CD8-positive, alpha-beta memory T cell (primary cell): ENCODE measurements at regions of chr15 and their contacts with region 1.

Region 1: DNA sequence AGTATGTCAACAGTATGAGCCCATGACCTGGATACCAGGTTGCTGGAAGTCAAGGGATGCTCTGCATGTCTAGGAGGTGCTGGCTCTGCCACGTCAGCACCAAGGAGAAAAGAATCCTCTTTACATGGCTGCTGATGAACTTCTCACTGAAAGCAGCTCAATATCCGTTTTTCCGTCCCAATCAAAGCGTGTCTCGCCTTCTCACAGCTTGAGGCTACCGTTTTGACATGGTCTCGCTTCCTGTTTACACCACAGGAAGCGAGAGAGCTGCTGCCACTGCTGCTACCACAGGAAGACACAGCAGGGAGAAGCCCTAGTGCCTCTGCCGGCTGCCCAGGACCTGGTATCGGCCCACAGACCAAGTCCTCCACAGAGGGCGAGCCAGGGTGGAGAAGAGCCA is 27.3 kb downstream of the STARD5 start:
- DNase-seq: peak; percentile 53 to 85 (median 83)
- H3K4me3 ChIP-seq: peak overlapping the region; percentile 89
- H3K4me3 Mint-ChIP-seq: peak overlapping the region; percentile 96 to 100 (median 99)
- H3K27ac ChIP-seq: peak overlapping the region; percentile 61
- H3K27ac Mint-ChIP-seq: peak overlapping the region; percentile 91 to 100 (median 98)
- H3K4me1 ChIP-seq: peaks cover 59% of the 10 kb centered on the region
- H3K4me1 Mint-ChIP-seq: peaks cover 65 to 66% (median 65%) of the 10 kb centered on the region in 3 donors
- H3K27me3 ChIP-seq: no peaks in the 10 kb centered on the region
- H3K27me3 Mint-ChIP-seq: peaks cover 0 to 2% of the 10 kb centered on the region in 2 donors

Region 2: DNA sequence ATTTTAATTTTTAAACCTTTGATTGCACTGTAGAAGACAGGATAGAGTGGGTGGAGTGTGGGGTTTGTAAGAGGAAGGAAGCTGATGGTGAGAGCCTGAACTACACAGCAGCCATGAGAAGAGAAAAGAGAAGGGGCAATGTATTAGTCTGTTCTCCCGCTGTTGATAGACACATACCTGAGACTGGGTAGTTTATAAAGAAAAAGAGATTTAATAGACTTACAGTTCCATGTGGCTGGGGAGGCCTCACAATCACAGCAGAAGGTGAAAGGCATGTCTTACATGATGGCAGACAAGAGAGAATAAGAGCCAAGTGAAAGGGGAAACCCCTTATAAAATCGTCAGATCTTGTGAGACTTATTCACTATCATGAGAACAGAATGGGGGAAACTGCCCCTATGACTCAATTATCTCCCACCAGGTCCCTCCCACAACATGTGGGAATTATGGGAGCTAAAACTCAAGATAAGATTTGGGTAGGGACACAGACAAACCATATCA is 10.0 kb before region 1 on chr15:
- CTCF ChIA-PET with region 1: interaction called, 19 read pairs
- POLR2A ChIA-PET with region 1: interaction called, 5 read pairs
- DNase-seq: peak in 2 of 5 donors; percentile 48 to 74
- H3K4me3 ChIP-seq: peak overlapping the region; percentile 21
- H3K4me3 Mint-ChIP-seq: peak overlapping the region; percentile 4 to 78 (median 73)
- H3K27ac ChIP-seq: no peak overlapping the region
- H3K27ac Mint-ChIP-seq: peak overlapping the region; percentile 89 to 98 (median 96)
- H3K4me1 ChIP-seq: peaks cover 75% of the 10 kb centered on the region
- H3K4me1 Mint-ChIP-seq: peaks cover 67 to 78% (median 75%) of the 10 kb centered on the region in 3 donors
- H3K27me3 ChIP-seq: no peaks in the 10 kb centered on the region
- H3K27me3 Mint-ChIP-seq: no peaks in the 10 kb centered on the region

Region 3: GRCh38 chr15:81308260-81308659 is 11.6 kb after region 1 on chr15:
- CTCF ChIA-PET with region 1: interaction called, 11 read pairs
- POLR2A ChIA-PET with region 1: interaction called, 17 read pairs
- DNase-seq: no peak
- H3K4me3 ChIP-seq: no peak overlapping the region
- H3K4me3 Mint-ChIP-seq: no peak overlapping the region
- H3K27ac ChIP-seq: no peak overlapping the region
- H3K27ac Mint-ChIP-seq: peak overlapping the region in 7 of 8 donors; percentile 26 to 100 (median 74)
- H3K4me1 ChIP-seq: peaks cover 64% of the 10 kb centered on the region
- H3K4me1 Mint-ChIP-seq: peaks cover 75 to 99% (median 91%) of the 10 kb centered on the region in 3 donors
- H3K27me3 ChIP-seq: no peaks in the 10 kb centered on the region
- H3K27me3 Mint-ChIP-seq: no peaks in the 10 kb centered on the region

Region 4: GRCh38 chr15:81336568-81336967 is 39.9 kb after region 1 on chr15:
- CTCF ChIA-PET with region 1: interaction called, 20 read pairs
- POLR2A ChIA-PET with region 1: no interaction called
- DNase-seq: peak; percentile 13 to 59 (median 31)
- H3K4me3 ChIP-seq: no peak overlapping the region
- H3K4me3 Mint-ChIP-seq: no peak overlapping the region
- H3K27ac ChIP-seq: no peak overlapping the region
- H3K27ac Mint-ChIP-seq: peak overlapping the region in 3 of 8 donors; percentile 13 to 66 (median 60)
- H3K4me1 ChIP-seq: peaks cover 2% of the 10 kb centered on the region
- H3K4me1 Mint-ChIP-seq: peaks cover 0 to 5% (median 5%) of the 10 kb centered on the region in 3 donors
- H3K27me3 ChIP-seq: no peaks in the 10 kb centered on the region
- H3K27me3 Mint-ChIP-seq: no peaks in the 10 kb centered on the region

Region 5: GRCh38 chr15:81780966-81781365 is 484.3 kb after region 1 on chr15:
- CTCF ChIA-PET with region 1: no interaction called
- POLR2A ChIA-PET with region 1: no interaction called
- DNase-seq: no peak
- H3K4me3 ChIP-seq: no peak overlapping the region
- H3K4me3 Mint-ChIP-seq: no peak overlapping the region
- H3K27ac ChIP-seq: no peak overlapping the region
- H3K27ac Mint-ChIP-seq: no peak overlapping the region
- H3K4me1 ChIP-seq: no peaks in the 10 kb centered on the region
- H3K4me1 Mint-ChIP-seq: no peaks in the 10 kb centered on the region
- H3K27me3 ChIP-seq: no peaks in the 10 kb centered on the region
- H3K27me3 Mint-ChIP-seq: peaks cover 11 to 17% of the 10 kb centered on the region in 2 donors